OCI-LY7 (cell line): ENCODE measurements at regions of chr7 and their contacts with region 1.

Region 1: DNA sequence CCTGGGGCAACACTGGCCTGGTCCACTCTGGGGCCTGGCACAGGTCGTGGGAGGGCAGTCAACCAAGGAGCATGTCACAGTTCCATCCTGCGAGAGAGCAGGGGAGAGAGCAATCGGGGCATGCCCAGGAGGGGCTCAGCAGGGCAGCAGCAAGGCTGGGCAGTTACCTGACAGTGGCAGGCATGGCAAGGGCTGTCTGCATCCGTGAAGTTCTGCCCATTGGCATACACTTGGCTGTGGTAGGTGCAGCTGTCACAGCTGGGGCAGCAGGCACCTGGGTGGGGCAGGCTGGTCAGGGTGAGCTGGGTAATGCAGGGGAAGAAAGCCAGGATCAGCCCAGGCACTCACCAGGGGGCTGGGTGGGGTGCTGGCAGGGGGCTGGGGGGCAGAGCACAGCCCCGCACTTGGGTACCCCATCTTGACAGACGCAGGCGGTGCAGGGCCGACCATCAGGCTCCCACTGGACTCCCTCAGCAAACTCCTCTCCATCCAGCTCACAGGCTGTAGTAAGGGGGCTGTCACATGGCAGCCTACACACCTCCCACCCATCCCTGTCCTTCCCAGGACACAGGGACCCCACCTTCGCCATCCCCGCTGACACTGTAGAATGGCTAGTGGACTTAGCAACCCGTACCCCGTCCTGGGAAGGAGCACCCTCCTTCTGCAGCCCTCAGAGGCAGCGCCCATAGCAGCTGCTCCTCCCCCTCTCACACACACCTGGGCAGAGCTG is 17.8 kb downstream of the KCP start:
- DNase-seq: no peak
- H3K4me3 ChIP-seq: no peak overlapping the region
- H3K27ac ChIP-seq: no peak overlapping the region
- H3K4me1 ChIP-seq: no peaks in the 10 kb centered on the region
- CTCF ChIP-seq: no peak

Region 2: DNA sequence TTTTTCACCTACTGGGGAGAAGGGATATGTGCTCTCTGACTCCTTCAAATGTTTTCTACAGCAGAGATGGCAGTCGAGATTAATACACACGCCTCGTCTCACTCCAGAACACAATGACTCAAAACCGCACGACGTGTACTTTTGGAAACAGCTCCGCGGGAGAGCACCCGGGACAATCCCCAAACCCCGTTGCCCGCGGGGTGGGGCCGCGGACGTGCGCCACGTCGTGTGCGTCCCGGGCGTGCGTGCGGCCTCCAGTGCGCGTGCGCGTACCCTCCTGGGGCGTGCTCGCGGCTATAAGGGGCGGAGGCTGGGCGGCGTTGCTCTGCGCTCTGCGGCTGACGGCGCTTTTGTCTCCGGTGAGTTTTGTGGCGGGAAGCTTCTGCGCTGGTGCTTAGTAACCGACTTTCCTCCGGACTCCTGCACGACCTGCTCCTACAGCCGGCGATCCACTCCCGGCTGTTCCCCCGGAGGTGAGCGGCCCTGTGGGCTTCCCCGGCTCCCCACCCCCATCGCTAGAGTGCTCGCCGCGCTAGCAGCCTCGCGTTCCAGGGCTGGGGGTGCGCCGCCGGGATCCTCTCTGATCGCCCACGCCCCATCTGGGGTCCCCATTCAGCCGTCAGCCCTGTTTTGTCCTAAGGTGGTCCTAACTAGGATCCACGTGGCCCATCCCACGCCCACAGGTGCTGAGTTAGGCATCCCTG is 437.0 kb before region 1 on chr7 and contains the start of gene HILPDA:
- CTCF ChIA-PET with region 1: no interaction called
- POLR2A ChIA-PET with region 1: no interaction called
- intact Hi-C with region 1: no loop called
- DNase-seq: peak; percentile 95
- H3K4me3 ChIP-seq: peak within 1 kb of the TSS; percentile 80
- H3K27ac ChIP-seq: peak within 1 kb of the TSS; percentile 52
- H3K4me1 ChIP-seq: peaks cover 33% of the 10 kb centered on the region
- CTCF ChIP-seq: no peak
- total RNA-seq, gene HILPDA: 23.7 and 33.9 TPM in 2 replicates

Region 3: GRCh38 chr7:128968624-128969023 is 75.9 kb after region 1 on chr7:
- CTCF ChIA-PET with region 1: interaction called, 10 read pairs
- POLR2A ChIA-PET with region 1: interaction called, 3 read pairs
- intact Hi-C with region 1: no loop called
- DNase-seq: no peak
- H3K4me3 ChIP-seq: no peak overlapping the region
- H3K27ac ChIP-seq: no peak overlapping the region
- H3K4me1 ChIP-seq: peaks cover 6% of the 10 kb centered on the region
- CTCF ChIP-seq: no peak